Psoas muscle (tissue), 8 donors: ENCODE measurements at regions of chr12 and their contacts with region 1.

Region 1: GRCh38 chr12:120086801-120087621 is 29.5 kb downstream of the RAB35 start:
- DNase-seq: peak; percentile 99
- ATAC-seq: peak; percentile 93 to 97 (median 94)
- H3K4me3 ChIP-seq: peak overlapping the region; percentile 61
- H3K27ac ChIP-seq: peak overlapping the region; percentile 89
- H3K4me1 ChIP-seq: peaks cover 28% of the 10 kb centered on the region
- H3K27me3 ChIP-seq: no peaks in the 10 kb centered on the region
- CTCF ChIP-seq: peak; percentile 95

Region 2: DNA sequence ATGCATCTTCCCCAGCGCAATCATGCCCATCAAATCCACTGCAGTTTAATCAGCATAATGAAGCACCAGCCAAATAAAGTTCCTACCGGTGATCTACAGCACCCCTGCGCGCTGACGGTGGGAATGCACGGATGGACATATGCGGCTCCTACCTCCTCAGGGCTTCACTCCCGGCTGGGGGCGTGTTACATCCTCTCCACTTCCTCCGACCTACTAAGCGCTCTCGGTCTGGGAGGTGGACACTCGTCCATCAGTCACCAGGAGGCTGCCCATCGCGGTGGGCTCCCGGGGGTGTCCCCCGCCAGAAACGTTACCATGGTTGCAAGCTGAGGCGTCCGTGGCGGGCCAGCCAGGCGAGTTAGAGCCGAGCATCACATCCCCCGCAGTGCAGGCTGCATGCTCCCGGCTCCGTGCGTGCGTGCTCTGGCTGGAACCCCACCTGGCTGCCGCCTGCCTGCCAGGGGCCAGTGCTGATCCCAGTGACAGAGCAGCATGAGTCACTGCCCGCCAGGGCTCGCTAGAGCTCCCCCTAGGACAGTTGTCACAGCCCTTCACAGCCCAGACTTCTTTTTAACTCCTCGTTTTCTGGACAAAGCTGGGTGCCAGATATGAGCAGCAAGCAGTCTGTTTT is 282.9 kb before region 1 on chr12:
- intact Hi-C with region 1: loop called in 1 of 2 experiments (anchors 10 kb)
- DNase-seq: peak; percentile 75 to 87
- ATAC-seq: peak; percentile 98 to 100 (median 99)
- H3K4me3 ChIP-seq: peak overlapping the region; percentile 48
- H3K27ac ChIP-seq: no peak overlapping the region
- H3K4me1 ChIP-seq: peaks cover 13% of the 10 kb centered on the region
- H3K27me3 ChIP-seq: peaks cover 0 to 34% (median 0%) of the 10 kb centered on the region in 3 donors
- CTCF ChIP-seq: peak; percentile 41

Region 3: GRCh38 chr12:119988782-119989668 is 98.0 kb before region 1 on chr12 and contains the start of gene BICDL1:
- intact Hi-C with region 1: loop called in 1 of 2 experiments (anchors 2 kb)
- DNase-seq: peak; percentile 48 to 66
- ATAC-seq: peak; percentile 52 to 68 (median 66)
- H3K4me3 ChIP-seq: peak within 1 kb of the TSS; percentile 65
- H3K27ac ChIP-seq: no peak within 1 kb of the TSS
- H3K4me1 ChIP-seq: no peaks in the 10 kb centered on the region
- H3K27me3 ChIP-seq: peaks cover 0 to 83% (median 5%) of the 10 kb centered on the region in 3 donors
- CTCF ChIP-seq: no peak
- total RNA-seq, gene BICDL1: 0.09 to 0.22 (median 0.15) TPM in 3 of 4 donors, not detected in the other

Region 4: DNA sequence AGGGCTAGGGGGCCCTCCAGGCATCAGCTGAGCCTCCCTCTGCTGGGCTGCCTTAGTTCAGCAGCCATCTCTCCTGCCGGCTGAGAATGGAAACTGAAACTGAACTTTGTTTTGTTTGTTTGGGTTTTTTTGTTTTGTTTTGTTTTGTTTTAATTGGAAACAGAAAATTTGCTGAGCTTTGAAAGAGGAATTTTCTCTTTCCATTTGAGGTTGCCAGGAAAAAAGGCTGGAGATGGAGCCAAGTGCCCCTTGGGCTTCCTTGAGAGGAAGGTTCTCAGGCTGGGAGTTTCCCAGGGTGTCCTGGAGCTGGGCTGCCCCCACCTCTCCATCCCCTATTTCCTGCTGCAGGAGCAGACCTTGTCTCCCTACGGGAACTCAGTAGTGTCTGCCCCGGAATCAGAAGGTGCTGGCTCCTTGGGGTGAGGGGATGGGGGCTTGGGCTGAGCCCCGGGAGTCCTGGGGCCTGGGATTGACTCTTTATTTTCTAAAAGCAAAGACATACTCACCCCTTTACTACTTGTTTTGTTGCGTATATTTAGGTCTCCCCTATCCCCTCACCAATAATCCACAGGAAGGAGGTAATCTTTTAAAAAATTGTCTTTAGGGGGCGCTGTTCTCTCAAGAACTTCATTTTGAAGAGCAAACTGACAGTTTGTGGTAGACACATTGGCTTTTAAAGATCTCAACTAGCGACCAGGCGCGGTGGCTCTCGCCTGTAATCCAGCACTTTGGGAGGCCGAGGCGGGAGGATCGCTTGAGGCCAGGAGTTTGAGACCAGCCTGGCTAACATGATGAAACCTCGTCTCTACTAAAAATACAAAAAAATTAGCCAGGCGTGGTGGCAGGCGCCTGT is 973.4 kb after region 1 on chr12:
- intact Hi-C with region 1: no loop called
- DNase-seq: no peak
- ATAC-seq: peak in 1 of 4 donors; percentile 38
- H3K4me3 ChIP-seq: peak overlapping the region; percentile 49
- H3K27ac ChIP-seq: peak overlapping the region; percentile 50
- H3K4me1 ChIP-seq: peaks cover 4% of the 10 kb centered on the region
- H3K27me3 ChIP-seq: peaks cover 0 to 31% (median 3%) of the 10 kb centered on the region in 3 donors
- CTCF ChIP-seq: peak; percentile 29